ENCODE measurements at regions of chr18 and their contacts with region 1.

Region 1: DNA sequence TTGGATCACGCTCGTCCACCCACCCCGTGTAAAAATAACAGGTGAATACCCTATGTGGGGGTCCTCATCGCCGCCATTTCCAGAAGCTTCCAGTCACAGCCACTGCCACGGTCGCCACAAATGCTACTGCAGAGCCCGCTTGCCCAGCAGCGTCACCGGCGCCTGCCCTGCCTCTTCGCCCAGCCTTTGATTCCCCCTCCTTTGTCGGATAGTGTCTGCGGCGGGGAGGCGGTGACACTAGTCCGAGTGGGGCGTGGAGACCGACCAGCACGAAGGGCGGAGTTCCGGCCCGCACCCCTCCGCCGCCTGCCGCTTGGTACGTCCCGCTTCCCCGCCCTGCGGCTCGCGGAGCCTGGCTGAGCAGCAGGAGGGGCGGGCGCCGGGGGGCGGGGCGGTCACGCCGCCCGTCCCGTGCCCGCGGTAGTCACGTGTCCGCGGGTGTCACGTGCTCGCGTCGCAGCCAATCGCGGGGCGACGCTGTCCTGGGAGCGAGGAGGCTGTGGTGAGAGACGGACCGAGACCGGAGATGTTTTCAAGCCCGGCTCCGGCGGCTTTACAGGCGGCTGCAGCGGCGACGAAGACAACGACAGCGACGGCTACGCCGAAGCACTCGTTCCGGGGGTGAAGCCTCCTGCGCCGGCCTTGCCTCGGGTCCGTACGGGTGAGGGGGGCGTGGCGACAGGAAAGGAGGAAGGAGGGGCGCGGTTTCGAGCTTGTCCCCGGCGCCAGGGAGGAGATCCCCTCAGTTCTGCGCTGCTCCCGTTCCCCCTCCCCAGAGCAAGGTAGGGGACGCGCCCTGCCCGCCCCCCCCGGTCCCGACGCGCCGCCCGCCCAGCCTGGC is at the start of gene ANKRD12:
- DNase-seq: peak; percentile 94 to 99 (median 97)
- H3K4me3 ChIP-seq: peak within 1 kb of the TSS; percentile 68 to 96 (median 86)
- H3K27ac ChIP-seq: peak within 1 kb of the TSS; percentile 92 to 100 (median 98)
- H3K27me3 ChIP-seq: no peaks in the 10 kb centered on the region
- CTCF ChIP-seq: peak in 21 of 56 donors; percentile 3 to 47 (median 23)
- total RNA-seq, gene ANKRD12: 136 to 273 (median 172) TPM

Region 2: DNA sequence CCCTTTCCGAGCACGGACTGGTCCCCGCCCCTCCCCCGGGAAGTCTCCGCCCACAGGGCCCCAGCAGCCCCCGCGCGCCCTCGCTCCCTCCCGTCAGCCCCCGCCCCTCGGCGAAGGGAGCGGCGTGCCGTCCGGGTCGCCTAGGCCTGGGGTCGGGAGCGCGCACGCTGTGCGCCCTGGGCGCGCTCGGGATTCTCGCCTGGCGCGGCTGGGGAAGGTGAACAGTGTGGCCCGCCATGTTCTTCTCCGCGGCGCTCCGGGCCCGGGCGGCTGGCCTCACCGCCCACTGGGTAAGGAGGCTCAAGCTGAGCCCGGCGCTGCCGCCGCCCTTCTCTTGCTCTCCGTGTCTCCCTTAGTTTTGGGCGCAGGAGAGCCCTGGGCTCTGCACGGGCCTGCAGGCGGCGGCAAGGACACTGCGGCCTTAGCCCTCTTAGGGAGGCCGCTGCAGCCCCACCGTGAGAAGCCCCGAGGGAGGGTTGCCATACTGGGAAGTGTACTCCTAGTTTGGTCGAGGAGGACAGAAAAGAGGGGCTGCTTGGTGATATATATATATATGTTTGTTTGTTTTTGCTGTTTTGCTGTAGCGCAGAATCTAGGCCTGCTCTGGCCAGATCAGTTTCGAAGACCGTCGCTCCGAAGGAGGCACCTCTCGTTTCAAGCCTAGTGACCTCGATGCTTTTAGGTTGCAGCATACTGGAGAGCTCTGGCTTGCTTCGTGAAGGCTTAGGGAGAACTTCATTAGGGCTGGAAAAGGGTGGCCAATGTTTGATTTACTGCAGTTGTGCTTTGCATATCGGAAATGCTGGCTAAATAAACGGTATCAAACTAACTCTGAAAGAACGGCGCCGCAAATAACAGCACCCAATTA is 33.8 kb before region 1 on chr18 and contains the start of gene NDUFV2:
- intact Hi-C with region 1: loop called (anchors 1 kb)
- DNase-seq: peak; percentile 89 to 99 (median 94)
- H3K4me3 ChIP-seq: peak within 1 kb of the TSS; percentile 58 to 98 (median 82)
- H3K27ac ChIP-seq: peak within 1 kb of the TSS; percentile 55 to 98 (median 95)
- H3K27me3 ChIP-seq: no peaks in the 10 kb centered on the region
- CTCF ChIP-seq: peak in 29 of 56 donors; percentile 8 to 60 (median 31)
- total RNA-seq, gene NDUFV2: 75.7 to 174 (median 133) TPM

Region 3: GRCh38 chr18:9474983-9475642 is 338.6 kb after region 1 on chr18 and contains the start of gene RALBP1:
- intact Hi-C with region 1: loop called in 1 of 2 experiments (anchors 2 kb)
- DNase-seq: peak; percentile 98 to 100 (median 100)
- H3K4me3 ChIP-seq: peak within 1 kb of the TSS; percentile 64 to 99 (median 95)
- H3K27ac ChIP-seq: peak within 1 kb of the TSS; percentile 86 to 99 (median 95)
- H3K27me3 ChIP-seq: no peaks in the 10 kb centered on the region
- CTCF ChIP-seq: peak in 50 of 56 donors; percentile 9 to 57 (median 38)
- total RNA-seq, gene RALBP1: 44.6 to 89.8 (median 64.5) TPM